ENCODE measurements at regions of chr6 and their contacts with region 1.

Region 1: DNA sequence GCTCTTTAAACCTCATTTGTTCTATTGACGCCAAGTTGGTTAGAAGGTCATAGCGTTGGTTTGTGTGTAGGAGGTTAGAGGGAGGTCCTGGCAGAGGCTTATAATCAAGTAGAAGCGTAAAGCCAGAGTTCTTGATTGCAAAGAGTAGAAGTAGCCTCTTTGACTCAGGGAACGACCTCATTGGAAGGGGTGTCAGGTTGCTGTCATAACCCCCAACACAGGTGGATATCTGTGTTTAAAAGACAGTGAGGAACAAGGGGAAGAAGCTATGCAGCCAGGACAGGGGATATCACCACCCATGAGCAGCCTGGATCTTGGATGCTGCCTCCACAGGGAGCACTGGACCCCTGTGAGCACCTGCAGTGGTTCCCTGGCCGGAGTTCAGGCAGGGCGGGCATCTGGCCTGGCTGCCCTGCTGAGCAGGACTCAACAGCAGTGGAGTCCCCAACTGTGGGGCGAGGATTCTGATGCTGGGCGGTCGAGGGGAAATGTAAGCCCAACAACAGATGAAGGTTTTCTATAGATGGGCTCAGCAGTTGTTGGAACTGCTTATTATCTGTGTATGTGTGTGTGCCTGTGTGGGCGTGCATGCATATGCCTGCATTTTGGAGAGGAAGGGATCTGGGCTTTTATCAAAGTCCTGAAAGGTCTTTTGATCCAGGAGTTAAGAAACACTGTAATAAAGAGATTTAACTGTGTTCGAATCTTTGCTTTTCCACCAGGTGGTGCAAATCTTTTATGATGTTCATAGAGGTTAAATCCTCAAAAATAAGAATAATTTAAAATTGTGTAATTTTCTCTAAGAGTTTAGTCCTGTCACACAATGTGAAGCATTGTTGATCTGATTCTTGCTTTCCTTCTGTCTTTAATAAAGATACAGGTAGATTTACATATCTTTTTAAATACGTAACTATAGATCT is 27.7 kb downstream of the HIVEP1 start:
- DNase-seq: no peak
- ATAC-seq: no peak
- H3K4me3 ChIP-seq: no peak overlapping the region
- H3K4me3 Mint-ChIP-seq: no peak overlapping the region
- H3K27ac ChIP-seq: no peak overlapping the region
- H3K27ac Mint-ChIP-seq: peak overlapping the region; percentile 69
- H3K4me1 ChIP-seq: peaks cover 15% of the 10 kb centered on the region
- H3K4me1 Mint-ChIP-seq: peaks cover 63% of the 10 kb centered on the region
- H3K27me3 ChIP-seq: no peaks in the 10 kb centered on the region
- H3K27me3 Mint-ChIP-seq: no peaks in the 10 kb centered on the region
- CTCF ChIP-seq: no peak

Region 2: DNA sequence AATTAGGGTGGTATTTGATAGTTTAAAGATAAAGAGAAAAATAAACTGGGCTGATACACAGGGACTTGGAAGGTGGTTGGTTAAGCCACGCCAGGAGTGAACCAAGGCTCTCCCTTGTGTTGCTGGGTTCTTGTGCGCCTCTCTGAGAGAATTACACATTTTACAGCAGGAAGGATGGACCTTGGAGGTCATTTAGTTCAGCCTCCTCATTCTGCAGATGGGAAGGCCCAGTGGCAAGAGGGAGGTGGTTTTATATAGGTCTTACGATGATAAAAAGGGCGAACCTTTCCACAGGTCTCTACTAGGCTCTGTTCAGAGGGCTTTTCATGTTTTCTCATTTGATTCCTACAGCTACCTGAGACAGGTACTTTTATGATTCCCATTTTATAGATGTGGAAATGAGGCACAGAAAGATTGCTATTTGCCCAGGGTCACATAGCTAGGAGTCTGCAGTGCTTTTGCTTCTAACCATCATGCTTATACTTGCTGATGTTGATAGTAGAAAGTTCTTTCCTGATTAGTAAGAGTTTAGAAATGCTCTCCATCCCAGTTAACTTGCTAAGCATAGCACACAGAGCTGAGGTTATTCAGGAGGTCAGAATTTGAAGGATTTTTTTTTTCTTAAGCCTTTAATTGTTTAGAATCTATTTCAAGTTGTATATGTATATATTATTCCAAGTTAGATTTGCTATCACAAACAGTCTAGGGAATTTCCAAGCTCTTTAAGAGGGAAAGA is 14.9 kb before region 1 on chr6:
- CTCF ChIA-PET with region 1: no interaction called
- POLR2A ChIA-PET with region 1: no interaction called
- intact Hi-C with region 1: loop called in 1 of 2 experiments (anchors 2 kb)
- DNase-seq: no peak
- ATAC-seq: no peak
- H3K4me3 ChIP-seq: no peak overlapping the region
- H3K4me3 Mint-ChIP-seq: no peak overlapping the region
- H3K27ac ChIP-seq: no peak overlapping the region
- H3K27ac Mint-ChIP-seq: no peak overlapping the region
- H3K4me1 ChIP-seq: peaks cover 12% of the 10 kb centered on the region
- H3K4me1 Mint-ChIP-seq: peaks cover 66% of the 10 kb centered on the region
- H3K27me3 ChIP-seq: no peaks in the 10 kb centered on the region
- H3K27me3 Mint-ChIP-seq: no peaks in the 10 kb centered on the region
- CTCF ChIP-seq: no peak